Common myeloid progenitor, CD34-positive (primary cell): ENCODE measurements at regions of chr14 and their contacts with region 1.

Region 1: DNA sequence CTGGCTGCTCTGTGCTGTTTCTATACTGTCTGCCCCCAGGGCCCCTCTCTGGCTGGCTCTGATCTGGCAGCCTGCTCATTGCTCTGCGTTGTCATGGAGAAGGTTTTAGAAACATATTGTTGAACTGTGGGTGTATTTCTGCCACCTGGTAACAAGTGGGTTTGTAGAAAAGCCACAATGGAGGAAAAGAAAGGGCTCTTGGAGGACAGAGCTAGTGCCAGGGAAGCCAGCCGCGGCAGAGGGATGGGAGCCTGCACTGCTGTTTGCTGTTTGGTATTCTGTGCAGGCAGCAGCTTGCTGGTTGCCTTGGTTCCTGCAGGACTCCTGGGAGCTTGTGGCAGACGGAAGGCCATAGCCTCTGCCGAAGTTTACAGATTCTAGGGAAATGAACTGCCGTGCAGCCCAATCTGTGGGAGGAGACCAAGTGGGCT is 15.1 kb downstream of the CCDC177 start:
- DNase-seq: peak in 2 of 3 donors; percentile 35 to 52
- H3K4me3 ChIP-seq: no peak overlapping the region
- H3K27ac ChIP-seq: no peak overlapping the region
- H3K4me1 ChIP-seq: no peaks in the 10 kb centered on the region
- H3K27me3 ChIP-seq: peaks cover 5 to 22% (median 16%) of the 10 kb centered on the region in 5 experiments

Region 2: DNA sequence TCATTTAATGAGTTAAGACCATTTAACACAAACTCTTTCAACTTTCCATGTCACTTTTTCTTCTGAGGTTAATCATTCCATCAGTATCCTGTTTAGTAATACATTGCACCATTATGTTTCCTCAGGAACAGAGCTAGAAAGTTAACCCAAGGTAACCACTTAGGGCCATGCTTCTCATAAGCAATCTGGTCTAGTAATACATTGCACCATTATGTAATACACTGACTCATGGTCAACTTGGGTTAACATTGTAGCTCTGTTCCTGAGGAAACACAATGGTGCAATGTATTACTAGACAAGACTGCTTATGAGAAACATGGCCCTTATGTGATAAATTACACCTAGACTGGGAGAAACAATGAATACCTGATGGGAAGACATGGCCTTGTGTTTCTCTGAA is 183.2 kb before region 1 on chr14:
- CTCF ChIA-PET with region 1: no interaction called
- POLR2A ChIA-PET with region 1: no interaction called
- DNase-seq: peak in 1 of 3 donors; percentile 14
- H3K4me3 ChIP-seq: no peak overlapping the region
- H3K27ac ChIP-seq: no peak overlapping the region
- H3K4me1 ChIP-seq: no peaks in the 10 kb centered on the region
- H3K27me3 ChIP-seq: no peaks in the 10 kb centered on the region

Region 3: GRCh38 chr14:69547701-69548348 is 11.8 kb before region 1 on chr14:
- CTCF ChIA-PET with region 1: interaction called, 21 read pairs
- POLR2A ChIA-PET with region 1: interaction called, 4 read pairs
- DNase-seq: peak; percentile 54 to 88 (median 84)
- H3K4me3 ChIP-seq: peak overlapping the region in 4 of 7 experiments; percentile 19 to 67 (median 50)
- H3K27ac ChIP-seq: no peak overlapping the region
- H3K4me1 ChIP-seq: peaks cover 0 to 24% (median 10%) of the 10 kb centered on the region in 4 experiments
- H3K27me3 ChIP-seq: peaks cover 0 to 39% (median 23%) of the 10 kb centered on the region in 5 experiments